CD8-positive, alpha-beta T cell (primary cell): ENCODE measurements at regions of chr11 and their contacts with region 1.

Region 1: DNA sequence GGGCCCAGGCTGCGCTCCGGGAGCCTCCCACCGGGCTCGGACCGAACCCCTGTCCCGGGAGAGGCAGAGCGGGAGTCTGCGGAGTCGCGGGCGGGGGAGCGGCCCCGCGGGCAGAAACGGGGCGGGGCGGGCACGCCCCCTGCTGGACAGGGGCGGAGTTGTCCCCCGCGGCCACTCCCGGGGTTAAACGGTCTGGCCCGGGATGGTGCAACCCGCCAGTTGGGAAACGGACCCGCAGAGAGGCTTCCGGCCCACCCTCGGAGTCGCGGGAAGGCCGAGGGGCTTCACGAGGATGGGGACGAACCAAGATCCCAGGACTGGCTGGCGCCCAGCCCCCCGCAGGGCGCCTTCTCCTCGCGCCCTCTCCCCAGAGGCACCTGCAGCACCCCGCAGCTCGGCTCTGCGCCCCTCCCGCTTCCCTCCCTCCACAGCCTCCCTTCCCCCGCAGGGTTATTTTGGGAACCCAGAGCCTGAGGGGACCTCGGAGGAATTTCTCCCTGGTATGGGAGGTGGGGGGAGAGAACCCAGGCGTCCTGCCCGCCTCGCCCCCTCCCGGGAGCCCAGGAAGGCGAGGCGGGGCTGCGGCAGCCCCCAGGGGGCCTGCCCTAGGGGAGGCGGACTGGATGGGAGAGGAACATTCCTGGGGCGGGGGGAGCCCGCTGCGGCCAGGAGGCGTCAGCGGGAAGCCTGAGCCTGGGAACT is 902 bp downstream of the RASGRP2 start:
- DNase-seq: peak; percentile 56 to 91 (median 77)
- ATAC-seq: peak; percentile 13
- H3K4me3 ChIP-seq: peak overlapping the region; percentile 78 to 89
- H3K4me3 Mint-ChIP-seq: peak overlapping the region; percentile 99
- H3K27ac ChIP-seq: peak overlapping the region; percentile 78 to 88
- H3K27ac Mint-ChIP-seq: no peak overlapping the region
- H3K4me1 ChIP-seq: peaks cover 31% of the 10 kb centered on the region
- H3K4me1 Mint-ChIP-seq: peaks cover 48% of the 10 kb centered on the region
- H3K27me3 ChIP-seq: no peaks in the 10 kb centered on the region
- H3K27me3 Mint-ChIP-seq: no peaks in the 10 kb centered on the region
- CTCF ChIP-seq: peak; percentile 90

Region 2: GRCh38 chr11:64553551-64554201 is 189.4 kb before region 1 on chr11:
- CTCF ChIA-PET with region 1: no interaction called
- POLR2A ChIA-PET with region 1: no interaction called
- intact Hi-C with region 1: loop called in 1 of 2 experiments (anchors 5 kb)
- DNase-seq: peak in 8 of 9 experiments; percentile 25 to 72 (median 60)
- ATAC-seq: peak; percentile 59
- H3K4me3 ChIP-seq: no peak overlapping the region
- H3K4me3 Mint-ChIP-seq: no peak overlapping the region
- H3K27ac ChIP-seq: no peak overlapping the region
- H3K27ac Mint-ChIP-seq: no peak overlapping the region
- H3K4me1 ChIP-seq: peaks cover 7% of the 10 kb centered on the region
- H3K4me1 Mint-ChIP-seq: peaks cover 11% of the 10 kb centered on the region
- H3K27me3 ChIP-seq: no peaks in the 10 kb centered on the region
- H3K27me3 Mint-ChIP-seq: peaks cover 5% of the 10 kb centered on the region
- CTCF ChIP-seq: peak; percentile 92

Region 3: DNA sequence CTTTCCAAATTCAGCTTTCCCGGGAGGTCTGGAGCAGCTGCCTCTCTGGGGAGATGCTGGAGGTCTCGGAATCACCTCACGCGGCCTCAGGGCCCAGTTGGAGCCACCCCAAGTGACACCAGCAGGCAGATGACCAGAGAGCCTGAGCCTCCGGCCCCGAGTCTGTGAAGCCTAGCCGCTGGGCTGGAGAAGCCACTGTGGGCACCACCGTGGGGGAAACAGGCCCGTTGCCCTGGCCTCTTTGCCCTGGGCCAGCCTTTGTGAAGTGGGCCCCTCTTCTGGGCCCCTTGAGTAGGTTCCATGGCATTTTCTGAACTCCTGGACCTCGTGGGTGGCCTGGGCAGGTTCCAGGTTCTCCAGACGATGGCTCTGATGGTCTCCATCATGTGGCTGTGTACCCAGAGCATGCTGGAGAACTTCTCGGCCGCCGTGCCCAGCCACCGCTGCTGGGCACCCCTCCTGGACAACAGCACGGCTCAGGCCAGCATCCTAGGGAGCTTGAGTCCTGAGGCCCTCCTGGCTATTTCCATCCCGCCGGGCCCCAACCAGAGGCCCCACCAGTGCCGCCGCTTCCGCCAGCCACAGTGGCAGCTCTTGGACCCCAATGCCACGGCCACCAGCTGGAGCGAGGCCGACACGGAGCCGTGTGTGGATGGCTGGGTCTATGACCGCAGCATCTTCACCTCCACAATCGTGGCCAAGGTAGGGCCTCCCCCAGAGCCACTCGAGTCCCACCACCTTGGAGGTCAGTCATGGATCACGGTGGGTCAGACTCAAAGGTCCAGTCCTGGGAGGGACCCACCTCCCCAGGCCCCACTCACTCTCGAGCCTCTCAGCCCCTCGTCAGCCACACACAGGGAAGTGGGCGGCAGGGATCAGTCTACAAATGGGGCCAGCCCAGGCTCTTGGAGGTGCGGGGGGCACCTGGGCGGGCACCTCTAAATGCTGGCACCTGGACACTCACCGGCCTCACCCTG is 151.5 kb before region 1 on chr11:
- CTCF ChIA-PET with region 1: no interaction called
- POLR2A ChIA-PET with region 1: no interaction called
- intact Hi-C with region 1: no loop called
- DNase-seq: no peak
- ATAC-seq: no peak
- H3K4me3 ChIP-seq: no peak overlapping the region
- H3K4me3 Mint-ChIP-seq: no peak overlapping the region
- H3K27ac ChIP-seq: no peak overlapping the region
- H3K27ac Mint-ChIP-seq: no peak overlapping the region
- H3K4me1 ChIP-seq: no peaks in the 10 kb centered on the region
- H3K4me1 Mint-ChIP-seq: no peaks in the 10 kb centered on the region
- H3K27me3 ChIP-seq: no peaks in the 10 kb centered on the region
- H3K27me3 Mint-ChIP-seq: peaks cover 12% of the 10 kb centered on the region
- CTCF ChIP-seq: no peak

Region 4: GRCh38 chr11:64723117-64723906 is 19.7 kb before region 1 on chr11 and contains the start of gene NRXN2:
- CTCF ChIA-PET with region 1: interaction called, 5 read pairs
- POLR2A ChIA-PET with region 1: interaction called, 4 read pairs
- intact Hi-C with region 1: loop called in 1 of 2 experiments (anchors 1 kb)
- DNase-seq: peak; percentile 62 to 94 (median 83)
- ATAC-seq: peak; percentile 94
- H3K4me3 ChIP-seq: peak within 1 kb of the TSS; percentile 71 to 78
- H3K4me3 Mint-ChIP-seq: peak within 1 kb of the TSS; percentile 70
- H3K27ac ChIP-seq: peak within 1 kb of the TSS; percentile 49 to 71
- H3K27ac Mint-ChIP-seq: no peak within 1 kb of the TSS
- H3K4me1 ChIP-seq: peaks cover 21% of the 10 kb centered on the region
- H3K4me1 Mint-ChIP-seq: peaks cover 18% of the 10 kb centered on the region
- H3K27me3 ChIP-seq: peaks cover 0 to 7% of the 10 kb centered on the region in 2 experiments
- H3K27me3 Mint-ChIP-seq: peaks cover 9% of the 10 kb centered on the region
- CTCF ChIP-seq: peak; percentile 97
- total RNA-seq, gene NRXN2: 0.17 to 0.43 TPM

Region 5: GRCh38 chr11:64778508-64779346 is 35.7 kb after region 1 on chr11 and contains the start of gene SF1:
- CTCF ChIA-PET with region 1: interaction called, 474 read pairs
- POLR2A ChIA-PET with region 1: interaction called, 263 read pairs
- intact Hi-C with region 1: loop called (anchors 1 kb)
- DNase-seq: peak; percentile 97 to 100 (median 99)
- ATAC-seq: peak; percentile 82
- H3K4me3 ChIP-seq: peak within 1 kb of the TSS; percentile 70 to 97
- H3K4me3 Mint-ChIP-seq: peak within 1 kb of the TSS; percentile 93
- H3K27ac ChIP-seq: peak within 1 kb of the TSS; percentile 93 to 98
- H3K27ac Mint-ChIP-seq: peak within 1 kb of the TSS; percentile 99
- H3K4me1 ChIP-seq: peaks cover 53% of the 10 kb centered on the region
- H3K4me1 Mint-ChIP-seq: peaks cover 58% of the 10 kb centered on the region
- H3K27me3 ChIP-seq: no peaks in the 10 kb centered on the region
- H3K27me3 Mint-ChIP-seq: no peaks in the 10 kb centered on the region
- CTCF ChIP-seq: no peak
- total RNA-seq, gene SF1: 1,574 to 1,625 TPM

Region 6: GRCh38 chr11:64793271-64794172 is 50.5 kb after region 1 on chr11:
- CTCF ChIA-PET with region 1: interaction called, 4 read pairs
- POLR2A ChIA-PET with region 1: interaction called, 10 read pairs
- intact Hi-C with region 1: no loop called
- DNase-seq: no peak
- ATAC-seq: no peak
- H3K4me3 ChIP-seq: no peak overlapping the region
- H3K4me3 Mint-ChIP-seq: no peak overlapping the region
- H3K27ac ChIP-seq: peak overlapping the region in 1 of 2 experiments; percentile 46
- H3K27ac Mint-ChIP-seq: peak overlapping the region; percentile 62
- H3K4me1 ChIP-seq: peaks cover 15% of the 10 kb centered on the region
- H3K4me1 Mint-ChIP-seq: peaks cover 26% of the 10 kb centered on the region
- H3K27me3 ChIP-seq: no peaks in the 10 kb centered on the region
- H3K27me3 Mint-ChIP-seq: no peaks in the 10 kb centered on the region
- CTCF ChIP-seq: no peak

Region 7: DNA sequence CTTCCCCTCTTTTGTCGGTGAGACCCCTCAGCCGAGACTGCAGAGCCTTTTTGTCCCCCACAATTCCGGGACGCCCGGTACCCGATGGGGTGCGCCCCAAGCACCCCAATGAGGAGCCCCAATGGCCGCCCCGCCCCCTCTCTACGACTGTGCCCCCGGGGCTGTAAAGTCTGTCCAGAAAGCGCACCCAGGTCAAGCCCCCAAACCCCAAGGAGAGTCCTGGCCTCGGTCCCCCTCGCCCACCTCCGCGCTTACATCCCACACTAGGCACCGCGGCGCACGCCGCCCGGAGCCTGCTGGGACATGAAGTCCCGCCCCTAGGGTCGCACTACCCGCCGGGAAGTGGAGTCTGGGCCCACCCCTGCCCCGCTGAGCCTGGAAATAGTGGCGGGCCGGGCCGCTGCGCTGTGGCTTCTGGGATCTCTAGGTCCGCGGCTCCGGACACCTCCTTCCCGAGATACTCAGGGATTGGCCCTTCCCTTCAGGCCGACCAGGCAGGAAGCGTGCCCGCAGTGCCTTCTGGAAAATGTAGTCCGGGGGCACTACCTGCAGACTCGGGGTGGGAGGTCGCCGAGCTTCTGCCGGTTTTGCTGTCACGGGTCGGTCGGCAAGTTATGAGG is 67.3 kb after region 1 on chr11 and contains the start of gene MEN1:
- CTCF ChIA-PET with region 1: no interaction called
- POLR2A ChIA-PET with region 1: interaction called, 20 read pairs
- intact Hi-C with region 1: loop called (anchors 1 to 2 kb)
- DNase-seq: peak; percentile 49 to 87 (median 75)
- ATAC-seq: peak; percentile 87
- H3K4me3 ChIP-seq: peak within 1 kb of the TSS; percentile 79 to 99
- H3K4me3 Mint-ChIP-seq: peak within 1 kb of the TSS; percentile 95
- H3K27ac ChIP-seq: peak within 1 kb of the TSS; percentile 60 to 92
- H3K27ac Mint-ChIP-seq: peak within 1 kb of the TSS; percentile 94
- H3K4me1 ChIP-seq: peaks cover 14% of the 10 kb centered on the region
- H3K4me1 Mint-ChIP-seq: peaks cover 31% of the 10 kb centered on the region
- H3K27me3 ChIP-seq: no peaks in the 10 kb centered on the region
- H3K27me3 Mint-ChIP-seq: no peaks in the 10 kb centered on the region
- CTCF ChIP-seq: no peak
- total RNA-seq, gene MEN1: 17.6 to 19.1 TPM

Region 8: GRCh38 chr11:65615229-65615941 is 872.3 kb after region 1 on chr11 and contains the start of gene PCNX3:
- CTCF ChIA-PET with region 1: no interaction called
- POLR2A ChIA-PET with region 1: no interaction called
- intact Hi-C with region 1: no loop called
- DNase-seq: peak; percentile 99 to 100 (median 100)
- ATAC-seq: peak; percentile 88
- H3K4me3 ChIP-seq: peak within 1 kb of the TSS; percentile 78 to 89
- H3K4me3 Mint-ChIP-seq: peak within 1 kb of the TSS; percentile 96
- H3K27ac ChIP-seq: peak within 1 kb of the TSS; percentile 92 to 97
- H3K27ac Mint-ChIP-seq: peak within 1 kb of the TSS; percentile 96
- H3K4me1 ChIP-seq: peaks cover 46% of the 10 kb centered on the region
- H3K4me1 Mint-ChIP-seq: peaks cover 45% of the 10 kb centered on the region
- H3K27me3 ChIP-seq: no peaks in the 10 kb centered on the region
- H3K27me3 Mint-ChIP-seq: no peaks in the 10 kb centered on the region
- CTCF ChIP-seq: no peak
- total RNA-seq, gene PCNX3: 52.7 to 56.4 TPM